ENCODE measurements at regions of chr6 and their contacts with region 1.

Region 1: DNA sequence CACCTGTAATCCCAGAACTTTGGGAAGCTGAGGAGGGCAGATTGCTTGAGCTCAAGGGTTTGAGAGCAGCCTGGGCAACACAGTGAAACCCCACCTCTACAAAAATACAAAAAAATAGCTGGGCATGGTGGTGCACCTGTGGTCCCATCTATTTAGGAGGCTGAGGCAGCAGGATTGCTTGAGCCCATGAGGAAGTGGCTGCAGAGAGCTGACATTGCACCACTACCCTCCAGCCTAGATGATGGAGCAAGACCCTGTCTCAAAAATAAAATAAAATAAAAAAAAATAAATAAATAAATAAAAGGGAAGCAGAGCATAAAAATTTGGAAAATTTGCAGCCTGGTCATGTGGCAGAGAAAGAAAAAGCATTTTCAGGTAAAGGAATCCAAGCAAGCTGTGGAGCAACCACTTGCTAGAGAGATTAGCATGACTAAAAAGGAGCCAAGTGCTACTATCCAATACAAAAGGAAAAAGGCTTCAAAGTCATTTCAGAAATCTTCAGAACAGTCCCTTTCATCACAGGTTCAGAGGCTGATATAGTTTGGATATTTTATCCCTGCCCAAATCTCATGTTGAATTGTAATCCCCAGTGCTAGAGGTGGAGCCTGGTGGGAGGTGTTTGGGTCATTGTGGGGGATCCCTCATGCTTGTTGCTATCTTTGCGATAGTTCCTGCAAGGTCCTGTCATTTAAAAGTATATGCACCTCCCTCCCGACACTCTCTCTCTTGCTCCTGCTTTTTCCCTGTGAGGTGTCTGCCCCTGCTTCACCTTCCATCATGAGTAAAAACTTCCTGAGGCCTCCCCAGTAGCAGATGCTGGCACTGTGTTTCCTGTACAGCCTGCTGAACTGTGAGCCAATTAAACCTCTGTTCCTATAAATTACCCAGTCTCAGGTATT is 11.2 kb upstream of the TTK start:
- DNase-seq: peak in 1 of 2 experiments; percentile 54
- H3K4me3 ChIP-seq: peak overlapping the region in 1 of 4 experiments; percentile 40; a peak in 1 of 8 replicates
- H3K27ac ChIP-seq: no peak overlapping the region
- H3K4me1 ChIP-seq: peaks cover 5 to 13% (median 10%) of the 10 kb centered on the region in 4 experiments; a peak in 6 of 7 replicates
- H3K27me3 ChIP-seq: no peaks in the 10 kb centered on the region
- CTCF ChIP-seq: no peak
- EP300 ChIP-seq: no peak
- POLR2A ChIP-seq: no peak
- RAD21 ChIP-seq: no peak

Region 2: DNA sequence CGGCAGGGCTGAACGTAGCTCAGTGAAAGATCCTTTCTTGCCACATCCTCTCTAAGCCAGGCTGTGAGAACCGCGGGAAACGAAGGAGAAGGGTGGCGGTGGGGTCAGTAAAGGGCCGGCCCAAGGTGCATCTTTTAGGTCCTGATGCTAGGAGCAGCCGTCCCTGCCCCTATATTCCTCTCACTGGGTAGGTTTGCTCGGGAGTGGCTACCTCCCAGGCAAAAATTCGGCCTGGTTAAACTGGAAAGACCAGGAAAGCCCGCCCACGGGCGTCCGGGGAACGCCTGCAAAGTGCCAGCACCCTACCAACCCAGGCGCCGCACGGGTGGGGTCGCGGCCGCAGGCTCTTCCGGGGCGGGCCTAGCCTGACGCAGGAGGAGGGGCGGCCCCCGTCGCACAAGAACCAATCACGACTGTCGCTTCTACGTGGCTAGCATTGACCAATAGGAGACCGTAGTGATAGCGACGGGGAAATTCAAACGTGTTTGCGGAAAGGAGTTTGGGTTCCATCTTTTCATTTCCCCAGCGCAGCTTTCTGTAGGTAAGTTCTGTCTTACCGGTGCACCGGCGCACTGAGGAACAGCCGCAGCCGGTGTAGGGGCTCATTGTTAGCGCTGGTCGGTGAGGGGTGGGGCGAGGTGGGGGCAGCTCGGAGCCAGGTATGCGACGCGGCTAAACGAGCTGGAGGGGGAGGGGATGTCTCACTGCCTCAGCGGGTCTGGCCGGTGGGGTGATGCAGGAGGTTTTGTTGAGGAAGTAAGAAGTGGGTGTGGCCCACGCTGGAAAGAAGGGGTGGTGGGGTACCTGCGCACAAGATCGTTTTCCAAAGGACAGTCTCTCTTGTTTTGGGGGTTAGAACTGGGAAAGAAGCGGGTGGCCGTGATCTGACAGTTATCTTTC is 11.2 kb after region 1 on chr6 and contains the start of gene TTK:
- CTCF ChIA-PET with region 1: interaction called, 3 read pairs
- POLR2A ChIA-PET with region 1: interaction called, 16 read pairs
- DNase-seq: peak; percentile 75 to 88
- H3K4me3 ChIP-seq: peak within 1 kb of the TSS; percentile 72 to 92 (median 84)
- H3K27ac ChIP-seq: peak within 1 kb of the TSS; percentile 93
- H3K4me1 ChIP-seq: peaks cover 0 to 4% (median 3%) of the 10 kb centered on the region in 4 experiments; a peak in 4 of 7 replicates
- H3K27me3 ChIP-seq: no peaks in the 10 kb centered on the region
- CTCF ChIP-seq: no peak
- EP300 ChIP-seq: no peak
- POLR2A ChIP-seq: peak in 1 of 2 experiments; percentile 79; a peak in 2 of 3 replicates
- RAD21 ChIP-seq: no peak
- total RNA-seq, gene TTK: 62.2 and 63.2 TPM in 2 replicates